PC-9 (cell line): ENCODE measurements at regions of chr2 and their contacts with region 1.

Region 1: GRCh38 chr2:233892793-233893192 is 24.4 kb upstream of the TRPM8 start:
- DNase-seq: peak in 1 of 2 experiments; percentile 27
- H3K4me3 ChIP-seq: no peak overlapping the region
- H3K27ac ChIP-seq: no peak overlapping the region
- H3K4me1 ChIP-seq: no peaks in the 10 kb centered on the region
- H3K27me3 ChIP-seq: peaks cover 7% of the 10 kb centered on the region; the same call in 1 of the 2 replicates
- CTCF ChIP-seq: no peak

Region 2: GRCh38 chr2:233764264-233764663 is 128.5 kb before region 1 on chr2:
- CTCF ChIA-PET with region 1: no interaction called
- POLR2A ChIA-PET with region 1: no interaction called
- intact Hi-C with region 1: no loop called
- DNase-seq: no peak
- H3K4me3 ChIP-seq: no peak overlapping the region
- H3K27ac ChIP-seq: no peak overlapping the region
- H3K4me1 ChIP-seq: peaks cover 11% of the 10 kb centered on the region; the same call in 1 of the 2 replicates
- H3K27me3 ChIP-seq: no peaks in the 10 kb centered on the region
- CTCF ChIP-seq: no peak

Region 3: DNA sequence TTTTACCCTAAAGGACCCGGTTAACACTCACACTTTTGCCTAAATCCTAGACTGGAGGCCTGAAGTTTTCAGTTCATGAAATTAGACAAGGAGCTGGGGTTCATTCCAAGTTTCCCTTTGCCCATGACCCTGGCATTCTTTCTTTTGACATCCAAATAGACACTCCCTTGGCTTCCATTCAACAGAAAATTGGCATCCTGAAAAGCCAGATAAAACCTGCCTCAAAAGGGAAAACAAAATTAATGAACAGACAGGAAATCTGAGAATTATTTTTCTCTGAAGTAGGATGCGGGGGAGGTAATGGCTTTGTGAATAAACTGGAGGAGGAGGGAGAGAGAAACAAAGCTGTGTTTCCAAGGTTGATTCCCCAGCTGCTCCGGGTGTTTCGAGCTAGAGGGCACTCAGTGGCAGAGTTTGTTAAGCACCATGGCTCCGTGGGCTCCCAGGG is 198.7 kb after region 1 on chr2:
- CTCF ChIA-PET with region 1: no interaction called
- POLR2A ChIA-PET with region 1: interaction called, 11 read pairs
- intact Hi-C with region 1: no loop called
- DNase-seq: peak; percentile 51 to 74
- H3K4me3 ChIP-seq: no peak overlapping the region
- H3K27ac ChIP-seq: peak overlapping the region; percentile 10; the same call in 1 of the 2 replicates
- H3K4me1 ChIP-seq: peaks cover 17% of the 10 kb centered on the region
- H3K27me3 ChIP-seq: no peaks in the 10 kb centered on the region
- CTCF ChIP-seq: no peak

Region 4: DNA sequence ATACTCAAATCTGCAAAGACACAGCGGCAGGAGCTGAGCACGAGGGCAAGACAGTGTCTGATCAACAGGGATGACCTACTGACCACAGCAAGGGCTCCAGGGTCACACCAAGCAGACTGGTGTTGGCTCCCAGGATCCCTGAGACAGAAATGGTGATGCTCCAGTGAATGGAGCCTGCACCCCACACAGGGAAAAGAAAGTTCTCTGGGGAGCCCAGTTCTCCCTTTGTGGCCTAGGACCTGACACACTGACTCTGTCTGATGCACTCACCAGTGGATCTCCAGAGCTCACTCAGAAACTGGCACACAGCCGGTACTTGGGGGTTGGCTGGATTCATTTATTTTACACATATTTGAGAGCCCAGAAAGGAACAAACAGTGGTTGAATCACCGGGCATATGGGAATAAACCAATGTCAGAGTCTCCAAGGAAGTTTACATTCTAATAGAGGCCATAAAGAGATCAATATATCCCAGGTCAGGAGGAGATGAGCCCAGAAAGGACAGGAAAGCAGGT is 819.7 kb after region 1 on chr2:
- CTCF ChIA-PET with region 1: no interaction called
- POLR2A ChIA-PET with region 1: no interaction called
- intact Hi-C with region 1: no loop called
- DNase-seq: no peak
- H3K4me3 ChIP-seq: no peak overlapping the region
- H3K27ac ChIP-seq: no peak overlapping the region
- H3K4me1 ChIP-seq: no peaks in the 10 kb centered on the region
- H3K27me3 ChIP-seq: no peaks in the 10 kb centered on the region
- CTCF ChIP-seq: no peak